CD4-positive, alpha-beta T cell (primary cell): ENCODE measurements at regions of chr5 and their contacts with region 1.

Region 1: DNA sequence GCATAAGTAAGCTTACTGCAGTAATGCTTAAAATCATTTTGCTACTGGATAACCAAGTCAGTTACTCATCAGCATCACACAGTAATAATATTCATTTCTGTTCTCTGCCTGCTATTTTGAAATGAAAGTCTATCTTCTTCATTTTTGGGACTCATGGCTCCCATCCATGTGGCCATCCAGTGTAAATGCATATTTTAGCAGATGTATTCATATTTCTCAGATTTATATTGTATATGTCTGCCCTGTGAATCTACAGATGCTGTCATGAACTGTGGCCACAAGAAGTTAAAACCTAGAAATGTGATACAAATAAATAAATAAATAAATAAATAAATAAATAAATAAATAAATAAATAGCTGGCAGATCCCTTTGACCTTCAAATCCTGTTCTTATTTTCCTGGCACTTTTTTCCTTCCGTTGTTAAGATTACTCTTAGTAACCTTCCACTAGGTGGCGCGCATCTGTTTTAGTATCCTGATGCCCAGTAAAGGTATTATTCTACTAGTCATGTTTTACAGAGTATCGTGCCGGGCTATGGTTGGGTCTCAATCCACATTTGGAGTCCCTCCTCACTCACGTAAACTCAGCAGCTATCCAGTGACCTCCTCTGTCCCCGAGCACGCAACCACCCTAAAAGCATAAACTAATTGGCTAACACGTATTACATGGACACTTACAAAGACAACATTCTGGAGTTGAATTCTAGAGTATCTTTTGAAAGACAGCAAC is 79.2 kb upstream of the IL7R start:
- DNase-seq: peak; percentile 50 to 90 (median 68)
- ATAC-seq: peak; percentile 63
- H3K4me3 ChIP-seq: peak overlapping the region; percentile 7
- H3K4me3 Mint-ChIP-seq: peak overlapping the region; percentile 77
- H3K27ac ChIP-seq: peak overlapping the region in 1 of 2 donors; percentile 19
- H3K27ac Mint-ChIP-seq: peak overlapping the region; percentile 84
- H3K4me1 ChIP-seq: peaks cover 32% of the 10 kb centered on the region
- H3K4me1 Mint-ChIP-seq: peaks cover 74% of the 10 kb centered on the region
- H3K27me3 ChIP-seq: no peaks in the 10 kb centered on the region
- H3K27me3 Mint-ChIP-seq: no peaks in the 10 kb centered on the region
- CTCF ChIP-seq: peak; percentile 87

Region 2: DNA sequence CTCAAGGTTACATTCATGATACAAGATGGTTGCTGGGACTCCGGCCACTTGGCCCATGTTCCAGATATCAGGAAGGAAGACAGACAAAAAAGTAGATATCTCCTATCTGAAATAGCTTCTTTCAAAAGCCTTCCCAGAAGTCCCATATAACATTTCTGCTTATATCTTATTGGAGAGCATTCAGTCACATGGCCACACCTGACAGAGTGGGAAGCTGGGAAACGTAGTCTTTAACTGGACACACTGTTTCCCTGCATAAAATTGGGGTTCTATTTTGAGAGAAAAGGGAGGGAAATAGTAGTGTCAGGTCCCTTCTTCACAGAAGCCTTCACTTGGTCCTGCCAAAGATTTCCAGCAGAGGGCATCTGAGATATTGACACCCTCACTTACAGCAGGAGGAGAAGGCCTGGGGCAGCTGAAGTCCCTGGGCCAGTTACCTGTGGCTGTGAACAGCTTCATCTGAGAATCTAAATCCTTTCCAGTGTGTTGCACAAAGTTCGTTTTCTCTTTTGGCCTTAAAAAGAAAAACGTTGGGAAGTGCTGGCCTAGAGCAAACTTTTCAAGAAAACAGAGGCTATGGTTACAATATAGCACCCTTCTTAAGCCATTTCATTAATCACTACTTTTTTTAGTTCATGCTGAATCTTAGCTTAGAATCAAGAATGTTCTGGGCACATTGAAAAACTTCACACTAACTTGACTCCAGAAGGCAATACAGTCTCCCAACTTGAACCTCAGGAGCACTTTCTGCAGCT is 126.3 kb before region 1 on chr5:
- CTCF ChIA-PET with region 1: interaction called, 25 read pairs
- POLR2A ChIA-PET with region 1: interaction called, 5 read pairs
- intact Hi-C with region 1: loop called (anchors 2 to 5 kb)
- DNase-seq: peak; percentile 37 to 84 (median 58)
- ATAC-seq: peak; percentile 99
- H3K4me3 ChIP-seq: no peak overlapping the region
- H3K4me3 Mint-ChIP-seq: no peak overlapping the region
- H3K27ac ChIP-seq: no peak overlapping the region
- H3K27ac Mint-ChIP-seq: peak overlapping the region; percentile 23
- H3K4me1 ChIP-seq: peaks cover 5% of the 10 kb centered on the region
- H3K4me1 Mint-ChIP-seq: peaks cover 16% of the 10 kb centered on the region
- H3K27me3 ChIP-seq: no peaks in the 10 kb centered on the region
- H3K27me3 Mint-ChIP-seq: no peaks in the 10 kb centered on the region
- CTCF ChIP-seq: peak; percentile 84

Region 3: GRCh38 chr5:35803191-35803651 is 25.7 kb after region 1 on chr5:
- CTCF ChIA-PET with region 1: interaction called, 7 read pairs
- POLR2A ChIA-PET with region 1: interaction called, 14 read pairs
- intact Hi-C with region 1: no loop called
- DNase-seq: peak in 5 of 14 experiments; percentile 22 to 72 (median 62)
- ATAC-seq: peak; percentile 51
- H3K4me3 ChIP-seq: no peak overlapping the region
- H3K4me3 Mint-ChIP-seq: peak overlapping the region; percentile 49
- H3K27ac ChIP-seq: peak overlapping the region in 1 of 2 donors; percentile 23
- H3K27ac Mint-ChIP-seq: peak overlapping the region; percentile 80
- H3K4me1 ChIP-seq: peaks cover 40% of the 10 kb centered on the region
- H3K4me1 Mint-ChIP-seq: peaks cover 85% of the 10 kb centered on the region
- H3K27me3 ChIP-seq: no peaks in the 10 kb centered on the region
- H3K27me3 Mint-ChIP-seq: no peaks in the 10 kb centered on the region
- CTCF ChIP-seq: no peak

Region 4: DNA sequence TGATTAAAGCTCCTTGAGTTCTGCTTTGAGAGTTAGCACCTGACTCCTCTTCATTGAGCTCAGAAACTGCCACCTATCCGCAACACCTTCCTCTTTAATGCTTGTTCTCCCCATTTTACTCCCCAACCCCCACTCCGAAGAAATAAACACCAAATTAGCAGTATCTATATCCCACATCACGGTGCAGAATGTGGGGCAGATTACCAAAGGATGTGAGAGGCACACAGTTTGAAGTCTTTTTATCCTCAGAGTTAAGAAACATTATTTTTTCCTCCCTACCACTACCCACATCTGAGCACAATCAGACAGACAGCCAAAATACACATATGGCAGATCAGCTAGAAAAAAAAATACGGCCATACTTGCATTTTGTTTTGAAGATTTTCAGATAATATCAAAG is 53.1 kb after region 1 on chr5:
- CTCF ChIA-PET with region 1: interaction called, 10 read pairs
- POLR2A ChIA-PET with region 1: interaction called, 47 read pairs
- intact Hi-C with region 1: no loop called
- DNase-seq: peak in 6 of 14 experiments; percentile 43 to 85 (median 71)
- ATAC-seq: peak; percentile 87
- H3K4me3 ChIP-seq: peak overlapping the region; percentile 10
- H3K4me3 Mint-ChIP-seq: peak overlapping the region; percentile 60
- H3K27ac ChIP-seq: peak overlapping the region; percentile 42 to 45
- H3K27ac Mint-ChIP-seq: peak overlapping the region; percentile 87
- H3K4me1 ChIP-seq: peaks cover 61% of the 10 kb centered on the region
- H3K4me1 Mint-ChIP-seq: peaks cover 95% of the 10 kb centered on the region
- H3K27me3 ChIP-seq: no peaks in the 10 kb centered on the region
- H3K27me3 Mint-ChIP-seq: no peaks in the 10 kb centered on the region
- CTCF ChIP-seq: no peak

Region 5: DNA sequence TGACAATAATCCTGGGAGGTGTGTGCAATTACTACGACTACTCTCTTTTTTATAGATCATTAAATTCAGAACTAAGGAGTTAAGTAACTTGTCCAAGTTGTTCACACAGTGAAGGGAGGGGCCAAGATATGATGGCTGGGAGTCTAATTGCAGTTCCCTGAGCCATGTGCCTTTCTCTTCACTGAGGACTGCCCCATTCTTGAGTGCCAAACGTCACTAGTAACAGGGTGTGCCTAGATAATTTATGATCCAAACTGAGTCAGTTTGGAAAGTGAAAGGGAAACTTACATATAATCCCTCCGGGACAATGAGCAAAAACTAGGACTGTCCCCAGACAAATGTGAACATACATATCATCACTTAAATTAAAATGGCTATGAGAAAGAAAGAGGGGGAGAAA is 99.4 kb after region 1 on chr5:
- CTCF ChIA-PET with region 1: interaction called, 3 read pairs
- POLR2A ChIA-PET with region 1: interaction called, 104 read pairs
- intact Hi-C with region 1: no loop called
- DNase-seq: no peak
- ATAC-seq: no peak
- H3K4me3 ChIP-seq: no peak overlapping the region
- H3K4me3 Mint-ChIP-seq: peak overlapping the region; percentile 47
- H3K27ac ChIP-seq: peak overlapping the region in 1 of 2 donors; percentile 32
- H3K27ac Mint-ChIP-seq: peak overlapping the region; percentile 85
- H3K4me1 ChIP-seq: peaks cover 46% of the 10 kb centered on the region
- H3K4me1 Mint-ChIP-seq: peaks cover 95% of the 10 kb centered on the region
- H3K27me3 ChIP-seq: no peaks in the 10 kb centered on the region
- H3K27me3 Mint-ChIP-seq: no peaks in the 10 kb centered on the region
- CTCF ChIP-seq: no peak